ENCODE measurements at regions of chr7 and their contacts with region 1.

Region 1: DNA sequence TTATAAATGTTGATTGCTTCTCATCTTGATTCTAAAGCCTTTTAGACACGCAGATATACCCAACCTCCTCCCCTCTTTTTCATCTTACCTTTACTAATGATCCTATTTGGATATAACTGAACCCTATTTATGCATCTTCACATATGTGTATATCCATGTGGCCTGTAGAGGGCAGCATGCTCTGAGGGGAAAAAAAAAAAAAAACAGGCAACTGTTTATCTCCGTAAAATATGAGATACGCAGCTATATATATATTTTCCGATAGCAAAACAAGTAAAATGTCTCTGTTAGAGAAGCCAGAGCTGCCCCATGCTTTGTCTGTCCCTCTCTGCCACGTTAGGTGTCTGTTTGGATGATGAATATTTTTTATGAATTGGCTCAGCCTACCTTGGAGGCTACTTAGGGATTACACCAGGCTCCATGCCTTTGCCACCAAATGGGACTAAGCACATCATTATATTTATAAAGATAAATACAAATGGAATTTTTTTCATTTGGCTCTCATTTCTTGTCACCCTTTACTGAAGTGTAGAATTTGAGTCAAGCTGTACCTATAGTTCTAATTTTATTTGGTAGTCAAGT is 174.8 kb upstream of the FZD1 start:
- DNase-seq: no peak
- H3K4me3 ChIP-seq: no peak overlapping the region
- H3K27ac ChIP-seq: no peak overlapping the region
- H3K27me3 ChIP-seq: no peaks in the 10 kb centered on the region
- CTCF ChIP-seq: peak; percentile 82

Region 2: DNA sequence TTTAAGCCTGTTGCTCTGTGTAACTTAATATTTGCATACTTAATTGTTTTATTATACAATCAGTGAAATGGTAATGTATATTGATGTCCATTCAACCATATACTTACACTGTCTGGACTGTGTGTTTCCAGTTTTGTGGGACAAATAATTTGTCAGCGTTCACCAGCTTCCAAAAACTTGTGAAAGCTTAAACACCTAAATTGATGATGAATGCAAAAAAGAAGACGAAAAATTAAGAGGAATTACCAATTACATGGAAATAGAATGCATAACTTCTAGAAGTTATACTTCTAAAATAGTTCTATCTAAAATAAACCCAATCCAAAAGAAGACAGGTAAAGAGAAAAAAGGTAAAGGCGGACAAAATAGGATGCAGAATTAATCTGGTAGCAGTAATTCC is 19.7 kb after region 1 on chr7:
- CTCF ChIA-PET with region 1: interaction called, 10 read pairs
- POLR2A ChIA-PET with region 1: no interaction called
- DNase-seq: no peak
- H3K4me3 ChIP-seq: no peak overlapping the region
- H3K27ac ChIP-seq: no peak overlapping the region
- H3K27me3 ChIP-seq: no peaks in the 10 kb centered on the region
- CTCF ChIP-seq: no peak